Aorta (tissue), 5 donors: ENCODE measurements at regions of chr11 and their contacts with region 1.

Region 1: DNA sequence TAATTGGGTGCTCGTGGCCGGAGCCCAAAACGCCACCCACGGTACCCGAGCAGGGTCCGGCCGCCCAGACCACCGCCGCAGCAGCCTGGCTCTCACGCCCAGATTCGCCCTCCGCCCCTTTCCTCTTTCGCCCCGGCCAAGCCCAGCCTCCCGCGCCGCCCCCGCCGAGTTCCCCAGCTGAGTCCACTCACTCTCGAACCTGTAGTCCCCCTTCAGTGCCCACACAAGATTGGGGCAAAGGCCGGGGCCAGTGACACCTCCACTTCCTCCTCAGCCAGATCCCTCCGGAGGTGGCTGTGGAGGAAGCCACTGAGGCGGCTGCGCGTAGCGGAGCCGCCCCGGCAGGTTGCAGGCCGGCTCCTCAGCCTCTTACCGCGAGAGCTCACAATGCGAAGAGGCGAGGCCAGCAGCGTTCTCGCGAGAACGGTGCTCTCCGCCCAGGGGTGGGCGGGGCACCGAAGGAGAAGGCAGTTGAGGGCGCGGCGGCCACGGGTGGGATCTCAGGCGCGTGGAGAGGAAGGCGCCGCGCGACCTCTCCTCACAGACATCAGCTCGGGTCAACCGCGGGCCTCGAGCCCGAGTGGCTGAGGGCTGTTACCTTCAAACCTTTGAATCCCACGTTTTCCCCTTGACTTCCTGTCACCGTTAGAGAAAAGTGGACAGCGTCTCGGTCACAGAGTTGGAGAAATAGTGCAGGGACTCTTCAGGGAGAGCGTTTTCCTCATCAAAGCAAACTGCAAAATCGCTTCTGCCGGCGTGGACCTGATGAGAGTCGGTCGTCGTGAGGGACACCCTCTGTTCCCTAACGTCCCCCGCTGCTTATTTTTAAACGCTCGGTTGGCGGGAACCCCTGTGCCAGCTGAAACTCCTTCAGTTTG is at the start of gene BTBD10:
- DNase-seq: peak; percentile 97 to 98
- ATAC-seq: peak; percentile 100
- H3K4me3 ChIP-seq: peak within 1 kb of the TSS; percentile 69 to 86
- H3K27ac ChIP-seq: peak within 1 kb of the TSS; percentile 47 to 60
- H3K4me1 ChIP-seq: peaks cover 0 to 4% of the 10 kb centered on the region in 2 donors
- H3K27me3 ChIP-seq: no peaks in the 10 kb centered on the region
- total RNA-seq, gene BTBD10: 31.8 to 35.3 TPM

Region 2: DNA sequence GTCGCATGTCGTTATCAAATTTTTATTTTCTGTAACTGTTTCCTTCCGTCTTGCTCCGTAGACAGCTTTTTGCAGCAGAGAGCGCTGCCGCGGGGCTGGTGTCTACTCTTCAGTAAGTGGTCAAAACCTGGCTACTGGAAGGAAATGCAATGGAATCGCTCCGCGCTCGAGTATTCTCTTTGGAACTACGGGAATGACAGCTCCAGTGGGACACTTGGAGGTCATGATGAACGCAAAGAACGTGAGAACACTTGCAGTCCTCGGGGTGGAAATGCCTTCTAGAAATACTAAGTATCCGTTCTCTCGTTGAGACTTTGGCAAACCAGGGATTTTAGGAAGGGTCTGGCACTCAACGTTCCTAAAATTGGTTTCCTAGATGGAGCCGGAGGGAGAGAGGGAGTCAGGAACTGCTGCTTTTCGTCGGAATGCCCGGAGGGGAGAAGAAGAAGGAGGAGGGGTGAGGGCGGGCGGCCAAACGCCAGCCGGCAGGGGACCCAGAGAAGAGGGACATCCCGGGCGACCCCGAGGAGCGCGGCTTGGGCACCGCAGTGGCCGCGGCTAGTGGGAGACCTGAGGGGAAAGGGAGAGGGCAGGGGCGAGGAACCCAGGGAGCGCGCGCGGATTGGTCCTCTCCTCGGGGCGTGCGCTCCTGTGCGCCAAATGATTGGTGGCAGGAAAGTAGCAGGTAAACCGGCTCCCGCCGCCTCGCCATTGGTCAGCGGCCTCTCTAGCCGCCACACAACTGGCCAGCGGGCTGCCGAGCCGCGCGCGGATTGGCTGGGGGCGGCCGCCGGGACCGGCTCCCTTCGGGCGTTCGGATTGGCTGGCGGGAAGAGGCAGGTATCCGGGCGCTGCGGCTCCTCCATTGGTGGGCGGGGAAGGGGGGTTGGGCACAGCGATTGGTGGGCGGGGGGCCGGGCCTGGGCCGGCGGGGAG is 186.0 kb before region 1 on chr11:
- intact Hi-C with region 1: loop called in 1 of 2 experiments (anchors 2 kb)
- DNase-seq: peak; percentile 99
- ATAC-seq: peak; percentile 97
- H3K4me3 ChIP-seq: peak overlapping the region; percentile 73 to 80
- H3K27ac ChIP-seq: peak overlapping the region in 1 of 2 donors; percentile 72
- H3K4me1 ChIP-seq: peaks cover 0 to 5% of the 10 kb centered on the region in 2 donors
- H3K27me3 ChIP-seq: no peaks in the 10 kb centered on the region

Region 3: GRCh38 chr11:13335319-13335718 is 127.8 kb before region 1 on chr11:
- intact Hi-C with region 1: loop called in 1 of 2 experiments (anchors 5 kb)
- DNase-seq: peak in 1 of 2 donors; percentile 64
- ATAC-seq: no peak
- H3K4me3 ChIP-seq: no peak overlapping the region
- H3K27ac ChIP-seq: no peak overlapping the region
- H3K4me1 ChIP-seq: peaks cover 0 to 2% of the 10 kb centered on the region in 2 donors
- H3K27me3 ChIP-seq: no peaks in the 10 kb centered on the region

Region 4: GRCh38 chr11:13384908-13385640 is 78.1 kb before region 1 on chr11:
- intact Hi-C with region 1: loop called in 1 of 2 experiments (anchors 5 kb)
- DNase-seq: no peak
- ATAC-seq: no peak
- H3K4me3 ChIP-seq: no peak overlapping the region
- H3K27ac ChIP-seq: peak overlapping the region; percentile 57 to 81
- H3K4me1 ChIP-seq: peaks cover 2 to 3% of the 10 kb centered on the region in 2 donors
- H3K27me3 ChIP-seq: no peaks in the 10 kb centered on the region

Region 5: GRCh38 chr11:13668102-13668956 is 205.2 kb after region 1 on chr11 and contains the start of gene FAR1:
- intact Hi-C with region 1: loop called in 1 of 2 experiments (anchors 10 kb)
- DNase-seq: peak; percentile 99
- ATAC-seq: peak; percentile 100
- H3K4me3 ChIP-seq: peak within 1 kb of the TSS; percentile 87 to 89
- H3K27ac ChIP-seq: peak within 1 kb of the TSS in 1 of 2 donors; percentile 37
- H3K4me1 ChIP-seq: no peaks in the 10 kb centered on the region
- H3K27me3 ChIP-seq: no peaks in the 10 kb centered on the region
- total RNA-seq, gene FAR1: 67.1 to 81.8 TPM

Region 6: GRCh38 chr11:14980854-14981253 is 1517.7 kb after region 1 on chr11:
- intact Hi-C with region 1: no loop called
- DNase-seq: no peak
- ATAC-seq: peak; percentile 83
- H3K4me3 ChIP-seq: no peak overlapping the region
- H3K27ac ChIP-seq: no peak overlapping the region
- H3K4me1 ChIP-seq: peaks cover 0 to 4% of the 10 kb centered on the region in 2 donors
- H3K27me3 ChIP-seq: peaks cover 0 to 1% of the 10 kb centered on the region in 2 donors